ENCODE measurements at regions of chr20 and their contacts with region 1.

Region 1: GRCh38 chr20:478949-479429 is 16.7 kb upstream of the TBC1D20 start:
- DNase-seq: no peak
- ATAC-seq: peak; percentile 59 to 68
- H3K4me3 ChIP-seq: no peak overlapping the region
- H3K27ac ChIP-seq: no peak overlapping the region
- H3K4me1 ChIP-seq: peaks cover 0 to 4% of the 10 kb centered on the region in 2 donors
- H3K27me3 ChIP-seq: no peaks in the 10 kb centered on the region
- CTCF ChIP-seq: peak; percentile 56 to 74 (median 68)
- POLR2A ChIP-seq: no peak

Region 2: GRCh38 chr20:341682-342081 is 137.3 kb before region 1 on chr20:
- in situ Hi-C with region 1: no loop called
- intact Hi-C with region 1: no loop called
- DNase-seq: no peak
- ATAC-seq: no peak
- H3K4me3 ChIP-seq: no peak overlapping the region
- H3K27ac ChIP-seq: no peak overlapping the region
- H3K4me1 ChIP-seq: peaks cover 0 to 6% of the 10 kb centered on the region in 2 donors
- H3K27me3 ChIP-seq: no peaks in the 10 kb centered on the region
- CTCF ChIP-seq: no peak
- POLR2A ChIP-seq: no peak

Region 3: GRCh38 chr20:391041-391711 is 87.8 kb before region 1 on chr20:
- in situ Hi-C with region 1: no loop called
- intact Hi-C with region 1: no loop called
- DNase-seq: no peak
- ATAC-seq: no peak
- H3K4me3 ChIP-seq: no peak overlapping the region
- H3K27ac ChIP-seq: no peak overlapping the region
- H3K4me1 ChIP-seq: no peaks in the 10 kb centered on the region
- H3K27me3 ChIP-seq: no peaks in the 10 kb centered on the region
- CTCF ChIP-seq: no peak
- POLR2A ChIP-seq: no peak

Region 4: DNA sequence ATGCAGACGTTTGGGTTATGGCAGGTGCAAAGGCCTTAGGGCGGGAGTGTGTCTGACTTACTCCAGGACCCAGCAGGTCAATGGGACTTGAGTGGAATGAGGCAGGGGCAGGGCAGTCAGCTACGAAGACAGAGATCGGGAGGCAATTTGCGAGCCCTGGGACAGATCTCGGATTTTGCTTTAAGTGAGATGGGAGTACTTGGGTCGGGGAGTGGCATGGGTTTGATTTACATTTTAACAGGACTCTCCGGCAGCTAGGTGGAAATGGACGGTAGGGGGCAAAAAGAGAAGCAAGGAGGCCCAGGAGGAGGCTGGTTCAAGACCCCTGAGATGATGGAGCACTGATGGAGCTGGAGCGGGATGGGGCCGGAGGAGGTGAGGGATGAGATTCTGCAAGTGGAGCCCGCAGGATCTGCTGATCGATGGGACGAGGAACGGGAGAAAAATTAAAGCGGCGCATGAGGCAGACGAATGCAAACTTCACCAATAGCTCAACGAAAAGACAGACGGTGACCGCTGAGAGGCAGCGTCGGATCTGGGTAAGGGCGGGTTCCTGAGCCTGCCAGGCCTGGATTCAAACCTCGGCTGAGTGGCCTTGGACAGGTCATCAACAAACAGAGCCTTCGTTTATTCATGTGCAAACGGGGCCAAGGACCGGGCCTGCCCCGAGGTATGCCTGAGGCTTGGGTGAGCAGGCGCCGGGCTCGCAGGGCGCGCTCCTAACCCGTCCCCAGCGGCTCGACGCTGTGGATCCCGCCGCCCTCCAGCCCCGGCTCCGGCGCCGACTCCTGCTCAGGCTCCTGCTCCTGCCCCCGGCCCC is 71.6 kb before region 1 on chr20:
- in situ Hi-C with region 1: loop called in 2 of 4 experiments (anchors 5 to 10 kb)
- intact Hi-C with region 1: loop called (anchors 1 kb)
- DNase-seq: peak; percentile 57 to 73
- ATAC-seq: peak; percentile 71 to 77
- H3K4me3 ChIP-seq: peak overlapping the region; percentile 63 to 94 (median 80)
- H3K27ac ChIP-seq: peak overlapping the region; percentile 95 to 98 (median 97)
- H3K4me1 ChIP-seq: peaks cover 25 to 26% of the 10 kb centered on the region in 2 donors
- H3K27me3 ChIP-seq: no peaks in the 10 kb centered on the region
- CTCF ChIP-seq: peak in 3 of 5 experiments; percentile 25 to 36 (median 28)
- POLR2A ChIP-seq: no peak

Region 5: GRCh38 chr20:419556-420168 is 59.3 kb before region 1 on chr20:
- in situ Hi-C with region 1: loop called in 1 of 4 experiments (anchors 10 kb)
- intact Hi-C with region 1: no loop called
- DNase-seq: no peak
- ATAC-seq: no peak
- H3K4me3 ChIP-seq: no peak overlapping the region
- H3K27ac ChIP-seq: no peak overlapping the region
- H3K4me1 ChIP-seq: peaks cover 3 to 19% of the 10 kb centered on the region in 2 donors
- H3K27me3 ChIP-seq: no peaks in the 10 kb centered on the region
- CTCF ChIP-seq: no peak
- POLR2A ChIP-seq: no peak

Region 6: DNA sequence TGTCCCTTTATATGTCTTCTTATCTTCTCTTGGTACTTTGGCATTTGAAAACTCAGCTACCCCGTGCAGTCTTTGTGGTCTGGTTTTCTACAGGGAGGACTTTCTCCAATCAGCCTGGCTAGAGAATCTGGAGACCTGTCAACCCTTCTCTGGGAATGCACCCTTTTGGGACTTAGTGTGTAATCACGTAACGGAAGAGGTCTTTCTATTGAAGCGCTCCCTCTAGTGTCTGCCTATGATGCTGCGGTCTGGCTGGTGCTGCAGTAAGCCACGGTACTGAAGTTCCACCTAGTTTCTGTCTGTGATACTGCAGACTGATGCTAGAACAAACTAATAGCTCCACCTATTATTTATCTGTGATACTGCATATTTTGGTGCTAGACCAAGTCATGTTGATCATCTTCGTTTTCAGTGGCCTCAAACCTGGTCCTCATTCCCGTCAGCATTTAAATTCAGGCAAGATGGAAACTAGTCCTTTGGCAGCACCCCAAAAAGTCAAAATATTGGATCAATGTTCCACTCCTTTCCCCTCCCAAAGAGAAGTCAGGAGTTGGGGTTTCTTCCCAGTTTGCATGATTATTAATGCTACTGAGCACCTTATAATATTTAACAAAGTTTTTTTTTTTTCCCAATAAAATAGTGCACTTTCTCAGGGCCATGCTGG is 1024.7 kb after region 1 on chr20:
- in situ Hi-C with region 1: no loop called
- intact Hi-C with region 1: no loop called
- DNase-seq: peak; percentile 35 to 36
- ATAC-seq: peak; percentile 54 to 70
- H3K4me3 ChIP-seq: no peak overlapping the region
- H3K27ac ChIP-seq: no peak overlapping the region
- H3K4me1 ChIP-seq: no peaks in the 10 kb centered on the region
- H3K27me3 ChIP-seq: no peaks in the 10 kb centered on the region
- CTCF ChIP-seq: peak; percentile 29 to 65 (median 53)
- POLR2A ChIP-seq: no peak

Measured in gastrocnemius medialis (tissue), 4 donors.